Mammary epithelial cell (primary cell): ENCODE measurements at regions of chr18 and their contacts with region 1.

Region 1: DNA sequence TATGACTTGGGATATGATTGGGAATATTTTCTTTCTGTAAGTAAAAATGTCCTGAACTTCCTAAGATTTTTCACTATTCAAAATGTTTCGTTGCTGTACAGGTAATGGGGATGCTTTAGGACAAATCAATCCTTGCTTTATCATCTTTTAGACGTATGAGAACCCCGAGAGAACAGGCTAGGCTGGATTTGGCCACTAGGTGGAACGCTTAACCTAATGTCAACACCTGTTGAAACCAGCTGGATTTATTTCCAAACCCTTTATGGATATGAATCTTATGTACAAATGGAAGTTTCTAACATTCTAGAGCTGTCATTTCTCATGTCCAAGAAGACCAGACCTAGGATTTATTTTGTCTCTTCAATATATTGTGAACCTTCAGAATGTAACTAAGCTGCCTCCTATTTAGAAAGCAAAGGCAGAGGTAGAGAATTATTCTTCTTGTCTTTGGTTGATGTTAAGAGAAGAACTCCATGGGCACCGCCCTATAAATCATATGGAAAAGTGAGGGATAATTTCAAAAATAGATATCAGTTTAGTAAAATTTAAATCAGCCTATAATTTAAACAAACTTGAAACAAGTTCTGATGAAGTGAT is 96.7 kb downstream of the PMAIP1 start:
- DNase-seq: peak; percentile 47
- H3K4me3 ChIP-seq: no peak overlapping the region
- H3K27ac ChIP-seq: no peak overlapping the region
- H3K4me1 ChIP-seq: peaks cover 3% of the 10 kb centered on the region
- H3K27me3 ChIP-seq: peaks cover 6% of the 10 kb centered on the region
- CTCF ChIP-seq: peak; percentile 87 to 90

Region 2: DNA sequence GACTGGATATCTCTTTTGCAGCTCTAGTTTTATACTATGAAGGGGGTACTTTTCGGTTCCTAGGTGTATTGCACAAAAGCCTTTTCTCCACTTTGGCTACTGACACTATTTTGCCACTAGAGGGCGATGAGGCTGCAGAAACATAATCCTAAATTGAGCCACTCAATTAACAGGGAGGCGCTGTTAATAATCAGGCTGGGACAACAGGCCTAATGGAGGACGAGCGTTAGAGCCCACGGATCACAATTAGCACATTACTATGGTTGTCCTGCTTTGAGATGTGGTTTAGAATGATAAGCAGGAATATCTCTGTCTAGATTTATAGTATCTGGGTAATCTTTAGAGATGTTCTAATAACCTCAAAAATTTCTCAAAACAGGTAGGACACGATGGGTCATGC is 158.9 kb before region 1 on chr18:
- CTCF ChIA-PET with region 1: interaction called, 3 read pairs
- dilution Hi-C with region 1: no loop called
- in situ Hi-C with region 1: no loop called
- intact Hi-C with region 1: loop called (anchors 1 kb)
- DNase-seq: peak; percentile 64
- H3K4me3 ChIP-seq: no peak overlapping the region
- H3K27ac ChIP-seq: no peak overlapping the region
- H3K4me1 ChIP-seq: no peaks in the 10 kb centered on the region
- H3K27me3 ChIP-seq: no peaks in the 10 kb centered on the region
- CTCF ChIP-seq: peak; percentile 91 to 95

Region 3: DNA sequence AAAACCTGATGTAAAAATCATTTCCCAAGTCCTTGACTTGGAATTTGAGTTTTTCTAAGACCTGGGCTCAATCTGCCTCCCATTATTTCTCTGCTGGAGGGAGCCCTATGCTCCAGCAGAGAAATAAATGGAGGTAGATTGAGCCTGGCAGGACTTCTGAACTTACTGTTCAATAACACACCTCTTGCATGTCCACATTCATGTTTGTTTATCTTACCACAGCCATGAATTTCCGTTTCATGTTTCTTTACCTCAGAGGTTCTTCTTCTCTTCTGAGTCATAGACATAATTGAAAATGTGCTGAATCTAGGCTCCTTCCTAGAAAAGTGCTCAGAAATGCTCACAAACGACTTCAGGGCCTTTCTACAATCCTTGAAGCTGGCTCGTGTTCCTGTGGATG is 74.2 kb after region 1 on chr18:
- CTCF ChIA-PET with region 1: no interaction called
- dilution Hi-C with region 1: no loop called
- in situ Hi-C with region 1: no loop called
- intact Hi-C with region 1: no loop called
- DNase-seq: peak; percentile 49
- H3K4me3 ChIP-seq: no peak overlapping the region
- H3K27ac ChIP-seq: no peak overlapping the region
- H3K4me1 ChIP-seq: peaks cover 8% of the 10 kb centered on the region
- H3K27me3 ChIP-seq: peaks cover 3% of the 10 kb centered on the region
- CTCF ChIP-seq: no peak

Region 4: DNA sequence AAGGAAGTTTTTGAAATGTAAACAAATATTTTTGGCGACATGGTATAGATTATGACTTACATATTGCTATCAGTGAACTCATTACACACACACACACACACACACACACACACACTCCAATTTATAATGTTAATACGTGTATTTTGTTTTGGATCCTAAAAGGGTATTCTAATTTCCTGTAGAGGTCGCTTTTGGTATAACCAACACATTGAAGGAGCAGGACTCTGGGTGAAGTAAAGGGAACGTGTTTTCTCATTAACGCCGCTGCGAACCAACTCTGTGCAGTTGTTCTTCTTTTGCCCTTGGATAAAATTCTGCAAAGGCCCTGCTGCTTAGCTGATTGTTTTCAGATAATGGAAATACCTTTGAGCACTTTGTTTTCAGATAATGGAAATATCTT is 93.7 kb after region 1 on chr18:
- CTCF ChIA-PET with region 1: no interaction called
- dilution Hi-C with region 1: no loop called
- in situ Hi-C with region 1: no loop called
- intact Hi-C with region 1: loop called (anchors 5 kb)
- DNase-seq: no peak
- H3K4me3 ChIP-seq: no peak overlapping the region
- H3K27ac ChIP-seq: no peak overlapping the region
- H3K4me1 ChIP-seq: no peaks in the 10 kb centered on the region
- H3K27me3 ChIP-seq: no peaks in the 10 kb centered on the region
- CTCF ChIP-seq: peak in 1 of 2 donors; percentile 34

Region 5: DNA sequence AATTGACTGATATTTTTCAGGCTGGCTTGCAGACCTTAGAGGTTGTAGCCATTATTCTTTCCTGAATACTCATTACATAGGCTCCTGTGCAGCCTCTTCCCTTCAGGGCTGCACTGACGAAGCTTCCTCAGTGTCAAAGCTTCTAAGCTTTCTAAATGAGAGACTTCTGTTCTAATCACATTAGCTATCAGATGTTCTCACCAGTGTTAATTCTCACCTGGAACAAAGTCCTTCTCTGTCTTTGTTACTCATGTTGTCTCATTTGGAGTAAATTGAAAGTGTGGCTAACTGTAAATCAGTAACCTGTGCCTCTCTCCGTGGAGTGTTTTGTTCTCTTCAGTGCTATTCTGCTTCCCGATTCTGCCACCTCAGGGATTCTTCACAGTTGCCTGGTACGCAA is 299.2 kb after region 1 on chr18:
- CTCF ChIA-PET with region 1: no interaction called
- dilution Hi-C with region 1: no loop called
- in situ Hi-C with region 1: no loop called
- intact Hi-C with region 1: loop called (anchors 10 kb)
- DNase-seq: no peak
- H3K4me3 ChIP-seq: no peak overlapping the region
- H3K27ac ChIP-seq: no peak overlapping the region
- H3K4me1 ChIP-seq: no peaks in the 10 kb centered on the region
- H3K27me3 ChIP-seq: peaks cover 3% of the 10 kb centered on the region
- CTCF ChIP-seq: no peak

Region 6: DNA sequence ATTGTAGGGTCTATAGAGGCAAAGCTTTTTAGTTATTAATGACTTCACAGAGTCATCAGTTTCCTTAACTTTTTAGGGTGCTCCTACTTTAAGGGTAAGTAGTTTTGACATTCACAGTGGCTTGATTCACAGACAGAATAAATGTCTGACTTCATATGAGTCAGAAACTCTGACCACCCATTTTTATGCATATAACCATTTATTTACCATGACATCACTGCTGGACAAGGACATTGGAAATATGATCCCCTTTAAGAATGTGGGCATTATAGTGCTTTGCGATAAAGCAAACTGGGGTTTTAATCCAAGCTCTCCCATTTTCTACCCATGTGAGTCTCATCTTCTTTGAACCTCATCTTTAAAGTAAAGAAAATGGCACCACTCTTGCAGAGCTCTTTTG is 538.1 kb after region 1 on chr18:
- CTCF ChIA-PET with region 1: no interaction called
- dilution Hi-C with region 1: loop called (anchors 10 kb)
- in situ Hi-C with region 1: no loop called
- intact Hi-C with region 1: no loop called
- DNase-seq: peak; percentile 8
- H3K4me3 ChIP-seq: no peak overlapping the region
- H3K27ac ChIP-seq: no peak overlapping the region
- H3K4me1 ChIP-seq: peaks cover 5% of the 10 kb centered on the region
- H3K27me3 ChIP-seq: peaks cover 3% of the 10 kb centered on the region
- CTCF ChIP-seq: no peak